ENCODE measurements at regions of chr9 and their contacts with region 1.

Region 1: DNA sequence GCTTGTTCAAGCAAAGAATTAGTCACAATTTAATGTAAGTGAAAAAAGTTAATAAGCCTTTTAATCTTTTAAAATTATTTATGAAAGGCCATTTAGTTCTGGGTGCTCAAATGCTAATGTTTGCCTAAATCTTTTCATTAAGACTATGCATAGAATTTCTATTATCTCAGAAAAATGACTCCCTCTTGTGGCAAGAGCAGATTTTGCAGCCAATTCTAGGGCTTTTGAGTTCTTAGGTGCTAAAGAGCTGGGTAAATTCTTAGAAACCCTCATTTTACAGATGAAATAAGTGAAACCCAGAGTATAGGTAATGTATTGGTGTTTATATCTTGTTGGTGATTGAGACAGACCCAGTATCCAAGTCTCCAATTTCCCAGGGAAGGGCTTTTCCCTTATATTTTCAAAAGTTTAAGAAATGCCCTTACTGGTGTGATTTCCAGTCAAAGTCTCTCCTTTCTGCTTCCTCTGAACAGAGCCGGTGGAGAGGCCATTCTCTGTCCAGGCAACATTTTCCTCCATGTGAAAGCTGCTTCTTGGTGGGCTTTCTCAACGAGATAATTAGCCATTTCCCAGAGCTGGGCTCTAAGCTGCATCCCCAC is 24.1 kb upstream of the PCSK5 start:
- DNase-seq: peak in 1 of 2 experiments; percentile 64
- H3K4me3 ChIP-seq: no peak overlapping the region
- H3K27ac ChIP-seq: no peak overlapping the region
- H3K4me1 ChIP-seq: no peaks in the 10 kb centered on the region
- H3K27me3 ChIP-seq: no peaks in the 10 kb centered on the region
- CTCF ChIP-seq: peak in 2 of 3 experiments; percentile 50 to 58; a peak in 2 of 4 replicates
- EP300 ChIP-seq: no peak
- POLR2A ChIP-seq: no peak
- RAD21 ChIP-seq: peak; percentile 60 to 64

Region 2: GRCh38 chr9:75855509-75855908 is 10.9 kb before region 1 on chr9:
- CTCF ChIA-PET with region 1: interaction called, 45 read pairs
- POLR2A ChIA-PET with region 1: no interaction called
- DNase-seq: no peak
- H3K4me3 ChIP-seq: no peak overlapping the region
- H3K27ac ChIP-seq: no peak overlapping the region
- H3K4me1 ChIP-seq: no peaks in the 10 kb centered on the region
- H3K27me3 ChIP-seq: no peaks in the 10 kb centered on the region
- CTCF ChIP-seq: peak in 2 of 3 experiments; percentile 52 to 54; a peak in 3 of 4 replicates
- EP300 ChIP-seq: no peak
- POLR2A ChIP-seq: no peak
- RAD21 ChIP-seq: peak; percentile 68 to 74

Region 3: DNA sequence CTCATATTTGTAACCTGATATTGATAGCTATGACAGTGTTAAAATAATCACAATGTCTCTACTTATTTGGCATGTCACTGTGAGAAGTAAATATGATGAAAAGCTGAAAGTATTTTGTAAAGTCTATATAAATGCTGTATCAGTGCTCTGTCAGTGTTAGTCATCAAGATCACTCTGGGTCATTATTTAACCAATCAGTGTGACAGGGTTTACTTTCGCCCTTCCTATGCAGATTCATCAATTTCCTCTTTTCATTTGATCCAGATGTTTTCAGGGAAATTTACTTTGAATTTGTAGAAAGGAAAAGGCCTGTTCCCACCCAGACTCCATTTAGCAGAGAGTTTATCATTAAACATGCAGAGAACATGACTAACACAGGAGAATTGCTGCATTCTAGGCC is 14.2 kb after region 1 on chr9:
- CTCF ChIA-PET with region 1: interaction called, 25 read pairs
- POLR2A ChIA-PET with region 1: no interaction called
- DNase-seq: no peak
- H3K4me3 ChIP-seq: no peak overlapping the region
- H3K27ac ChIP-seq: no peak overlapping the region
- H3K4me1 ChIP-seq: peaks cover 0 to 7% (median 1%) of the 10 kb centered on the region in 4 experiments; a peak in 2 of 7 replicates
- H3K27me3 ChIP-seq: no peaks in the 10 kb centered on the region
- CTCF ChIP-seq: no peak
- EP300 ChIP-seq: no peak
- POLR2A ChIP-seq: no peak
- RAD21 ChIP-seq: no peak